CD8-positive, alpha-beta memory T cell (primary cell): ENCODE measurements at regions of chr10 and their contacts with region 1.

Region 1: GRCh38 chr10:62038609-62039190 is 137.2 kb downstream of the ARID5B start:
- DNase-seq: peak; percentile 50 to 81 (median 61)
- H3K4me3 ChIP-seq: peak overlapping the region; percentile 10
- H3K4me3 Mint-ChIP-seq: peak overlapping the region in 6 of 7 donors; percentile 9 to 67 (median 42)
- H3K27ac ChIP-seq: no peak overlapping the region
- H3K27ac Mint-ChIP-seq: peak overlapping the region in 6 of 8 donors; percentile 1 to 78 (median 42)
- H3K4me1 ChIP-seq: peaks cover 49% of the 10 kb centered on the region
- H3K4me1 Mint-ChIP-seq: peaks cover 49 to 80% (median 70%) of the 10 kb centered on the region in 3 donors
- H3K27me3 ChIP-seq: no peaks in the 10 kb centered on the region
- H3K27me3 Mint-ChIP-seq: no peaks in the 10 kb centered on the region

Region 2: DNA sequence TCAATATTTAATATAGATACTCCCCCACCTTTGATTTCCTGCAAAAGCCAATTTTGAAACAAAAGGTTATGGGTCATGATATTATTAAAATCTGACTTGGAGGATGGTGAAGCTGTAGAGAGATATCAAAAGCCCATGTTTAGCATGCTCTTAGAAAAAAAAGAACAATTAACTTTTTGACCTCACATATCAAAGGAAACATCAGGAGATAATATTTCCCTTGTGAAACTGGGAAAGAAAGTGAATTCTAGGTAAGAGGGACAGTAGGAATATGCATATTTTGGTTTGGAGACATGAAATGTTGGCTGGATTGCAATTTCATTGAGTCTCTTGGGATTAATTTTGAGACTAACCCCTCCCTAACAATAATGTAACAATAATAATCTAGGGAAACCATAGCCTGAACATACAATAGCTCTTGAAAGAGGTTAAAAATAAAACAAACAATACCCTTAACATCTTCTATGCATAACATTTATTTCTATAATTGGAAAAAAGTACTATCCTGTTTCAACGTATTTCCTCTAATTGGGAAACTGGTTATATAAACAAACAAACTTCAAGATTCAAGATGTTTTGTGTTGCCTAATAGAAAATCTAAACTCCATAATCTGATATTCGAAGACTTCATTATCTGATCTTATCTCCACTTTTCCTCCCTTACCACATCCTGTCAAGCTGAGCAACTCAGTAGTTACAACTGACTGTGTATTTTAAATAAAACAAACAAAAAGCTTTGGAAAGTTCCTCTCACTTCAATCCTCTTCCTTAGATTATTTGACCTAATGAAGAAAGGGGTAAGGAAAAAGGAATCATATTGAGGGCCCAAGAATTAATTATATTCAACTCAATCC is 600.3 kb before region 1 on chr10:
- CTCF ChIA-PET with region 1: no interaction called
- POLR2A ChIA-PET with region 1: no interaction called
- DNase-seq: no peak
- H3K4me3 ChIP-seq: no peak overlapping the region
- H3K4me3 Mint-ChIP-seq: no peak overlapping the region
- H3K27ac ChIP-seq: no peak overlapping the region
- H3K27ac Mint-ChIP-seq: peak overlapping the region in 2 of 8 donors; percentile 12 to 44
- H3K4me1 ChIP-seq: peaks cover 4% of the 10 kb centered on the region
- H3K4me1 Mint-ChIP-seq: peaks cover 10 to 20% (median 14%) of the 10 kb centered on the region in 3 donors
- H3K27me3 ChIP-seq: no peaks in the 10 kb centered on the region
- H3K27me3 Mint-ChIP-seq: peaks cover 3 to 7% of the 10 kb centered on the region in 2 donors

Region 3: GRCh38 chr10:61822781-61823230 is 215.9 kb before region 1 on chr10:
- CTCF ChIA-PET with region 1: no interaction called
- POLR2A ChIA-PET with region 1: no interaction called
- DNase-seq: no peak
- H3K4me3 ChIP-seq: no peak overlapping the region
- H3K4me3 Mint-ChIP-seq: no peak overlapping the region
- H3K27ac ChIP-seq: no peak overlapping the region
- H3K27ac Mint-ChIP-seq: no peak overlapping the region
- H3K4me1 ChIP-seq: no peaks in the 10 kb centered on the region
- H3K4me1 Mint-ChIP-seq: no peaks in the 10 kb centered on the region
- H3K27me3 ChIP-seq: no peaks in the 10 kb centered on the region
- H3K27me3 Mint-ChIP-seq: peaks cover 0 to 4% of the 10 kb centered on the region in 2 donors

Region 4: DNA sequence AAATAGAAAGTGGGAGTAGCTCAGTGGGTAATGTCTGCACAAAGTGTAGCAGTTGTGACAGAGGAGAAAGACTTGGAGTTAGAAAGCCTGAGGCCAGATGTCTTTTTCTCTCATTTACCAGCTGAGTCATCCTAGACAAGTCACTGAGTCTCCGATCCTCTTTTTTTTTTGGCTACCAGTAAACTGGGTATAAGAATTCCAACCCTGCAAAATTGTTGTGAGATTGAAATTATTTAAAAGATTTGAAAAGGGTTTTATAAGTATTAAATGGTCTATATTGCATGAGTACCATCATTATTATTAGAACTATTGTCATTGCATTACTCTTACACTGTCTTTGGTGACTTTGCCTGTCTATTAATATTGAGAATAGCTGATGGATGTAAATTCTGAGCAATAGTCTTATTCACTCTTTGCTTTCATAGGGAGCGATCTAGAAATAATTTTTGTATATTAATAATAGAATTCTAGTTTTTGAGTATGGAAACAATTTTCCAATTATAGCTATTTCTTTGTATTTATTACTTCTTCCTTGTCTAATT is 63.2 kb before region 1 on chr10:
- CTCF ChIA-PET with region 1: no interaction called
- POLR2A ChIA-PET with region 1: no interaction called
- DNase-seq: no peak
- H3K4me3 ChIP-seq: no peak overlapping the region
- H3K4me3 Mint-ChIP-seq: no peak overlapping the region
- H3K27ac ChIP-seq: no peak overlapping the region
- H3K27ac Mint-ChIP-seq: no peak overlapping the region
- H3K4me1 ChIP-seq: no peaks in the 10 kb centered on the region
- H3K4me1 Mint-ChIP-seq: peaks cover 9 to 60% (median 54%) of the 10 kb centered on the region in 3 donors
- H3K27me3 ChIP-seq: no peaks in the 10 kb centered on the region
- H3K27me3 Mint-ChIP-seq: no peaks in the 10 kb centered on the region

Region 5: GRCh38 chr10:62025901-62026879 is 12.5 kb before region 1 on chr10:
- CTCF ChIA-PET with region 1: interaction called, 39 read pairs
- POLR2A ChIA-PET with region 1: no interaction called
- DNase-seq: no peak
- H3K4me3 ChIP-seq: no peak overlapping the region
- H3K4me3 Mint-ChIP-seq: no peak overlapping the region
- H3K27ac ChIP-seq: no peak overlapping the region
- H3K27ac Mint-ChIP-seq: peak overlapping the region in 1 of 8 donors; percentile 60
- H3K4me1 ChIP-seq: peaks cover 15% of the 10 kb centered on the region
- H3K4me1 Mint-ChIP-seq: peaks cover 49 to 95% (median 91%) of the 10 kb centered on the region in 3 donors
- H3K27me3 ChIP-seq: no peaks in the 10 kb centered on the region
- H3K27me3 Mint-ChIP-seq: no peaks in the 10 kb centered on the region

Region 6: GRCh38 chr10:62050893-62051433 is 12.3 kb after region 1 on chr10:
- CTCF ChIA-PET with region 1: interaction called, 44 read pairs
- POLR2A ChIA-PET with region 1: no interaction called
- DNase-seq: peak; percentile 23 to 83 (median 52)
- H3K4me3 ChIP-seq: peak overlapping the region; percentile 47
- H3K4me3 Mint-ChIP-seq: peak overlapping the region; percentile 78 to 93 (median 88)
- H3K27ac ChIP-seq: peak overlapping the region; percentile 60
- H3K27ac Mint-ChIP-seq: peak overlapping the region; percentile 79 to 99 (median 94)
- H3K4me1 ChIP-seq: peaks cover 88% of the 10 kb centered on the region
- H3K4me1 Mint-ChIP-seq: peaks cover 96 to 99% (median 98%) of the 10 kb centered on the region in 3 donors
- H3K27me3 ChIP-seq: no peaks in the 10 kb centered on the region
- H3K27me3 Mint-ChIP-seq: no peaks in the 10 kb centered on the region

Region 7: GRCh38 chr10:62278441-62278910 is 239.8 kb after region 1 on chr10:
- CTCF ChIA-PET with region 1: no interaction called
- POLR2A ChIA-PET with region 1: no interaction called
- DNase-seq: no peak
- H3K4me3 ChIP-seq: no peak overlapping the region
- H3K4me3 Mint-ChIP-seq: no peak overlapping the region
- H3K27ac ChIP-seq: no peak overlapping the region
- H3K27ac Mint-ChIP-seq: no peak overlapping the region
- H3K4me1 ChIP-seq: no peaks in the 10 kb centered on the region
- H3K4me1 Mint-ChIP-seq: no peaks in the 10 kb centered on the region
- H3K27me3 ChIP-seq: no peaks in the 10 kb centered on the region
- H3K27me3 Mint-ChIP-seq: peaks cover 8 to 14% of the 10 kb centered on the region in 2 donors